ENCODE measurements at regions of chr2 and their contacts with region 1.

Region 1: DNA sequence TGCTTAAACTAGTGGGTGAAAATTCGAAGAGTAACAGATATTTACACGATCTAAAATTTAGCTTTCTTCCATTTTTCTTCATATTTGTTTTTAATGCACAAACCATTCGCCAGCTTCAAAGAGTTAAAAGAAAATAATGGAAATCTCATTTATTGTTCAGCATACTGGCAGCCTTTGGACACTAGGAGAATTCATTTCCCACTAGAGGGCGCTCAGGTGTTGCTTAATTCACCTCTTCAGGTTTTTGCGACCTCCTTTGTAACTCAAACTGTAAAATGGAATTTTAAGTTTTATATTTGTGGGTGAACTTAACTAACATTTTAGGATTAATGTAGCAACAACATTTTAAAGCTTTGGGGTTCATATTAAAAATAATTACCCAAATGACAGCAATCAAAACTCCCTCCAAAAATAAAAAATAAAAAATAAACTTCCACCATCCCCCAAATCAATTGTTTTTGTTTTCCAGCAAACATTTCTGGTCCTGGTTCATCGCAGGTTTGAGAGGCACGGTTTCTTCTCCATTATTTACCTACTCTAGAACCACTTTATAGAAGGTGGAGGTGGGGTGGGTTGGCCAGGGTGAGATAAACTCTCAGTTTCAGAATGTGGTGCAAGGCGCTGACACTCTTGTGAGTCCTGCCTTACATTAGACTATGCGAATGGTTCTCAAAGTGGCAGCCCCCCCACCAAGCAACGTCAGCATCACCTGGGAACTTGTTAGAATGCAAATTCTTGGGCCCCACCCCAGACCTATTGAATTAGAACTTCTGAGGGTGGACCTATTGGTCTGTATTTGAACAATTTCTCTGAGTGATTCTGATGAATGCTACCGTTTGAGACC is 24.7 kb upstream of the PNPT1 start:
- DNase-seq: peak; percentile 68
- H3K4me3 Mint-ChIP-seq: no peak overlapping the region
- H3K27ac Mint-ChIP-seq: no peak overlapping the region
- H3K4me1 Mint-ChIP-seq: no peaks in the 10 kb centered on the region
- H3K27me3 Mint-ChIP-seq: peaks cover 6% of the 10 kb centered on the region

Region 2: GRCh38 chr2:55961318-55961911 is 243.0 kb after region 1 on chr2:
- CTCF ChIA-PET with region 1: interaction called, 4 read pairs
- intact Hi-C with region 1: loop called (anchors 1 kb)
- DNase-seq: no peak
- H3K4me3 Mint-ChIP-seq: no peak overlapping the region
- H3K27ac Mint-ChIP-seq: no peak overlapping the region
- H3K4me1 Mint-ChIP-seq: no peaks in the 10 kb centered on the region
- H3K27me3 Mint-ChIP-seq: peaks cover 4% of the 10 kb centered on the region

Region 3: GRCh38 chr2:56009758-56010458 is 291.5 kb after region 1 on chr2:
- CTCF ChIA-PET with region 1: interaction called, 3 read pairs
- intact Hi-C with region 1: loop called (anchors 1 kb)
- DNase-seq: no peak
- H3K4me3 Mint-ChIP-seq: no peak overlapping the region
- H3K27ac Mint-ChIP-seq: no peak overlapping the region
- H3K4me1 Mint-ChIP-seq: no peaks in the 10 kb centered on the region
- H3K27me3 Mint-ChIP-seq: peaks cover 4% of the 10 kb centered on the region

Region 4: GRCh38 chr2:56132138-56132537 is 413.8 kb after region 1 on chr2:
- CTCF ChIA-PET with region 1: interaction called, 3 read pairs
- intact Hi-C with region 1: loop called (anchors 1 kb)
- DNase-seq: no peak
- H3K4me3 Mint-ChIP-seq: no peak overlapping the region
- H3K27ac Mint-ChIP-seq: no peak overlapping the region
- H3K4me1 Mint-ChIP-seq: no peaks in the 10 kb centered on the region
- H3K27me3 Mint-ChIP-seq: no peaks in the 10 kb centered on the region

Region 5: GRCh38 chr2:56183643-56184499 is 465.5 kb after region 1 on chr2 and contains the start of gene CCDC85A:
- CTCF ChIA-PET with region 1: no interaction called
- intact Hi-C with region 1: loop called (anchors 2 kb)
- DNase-seq: peak; percentile 76
- H3K4me3 Mint-ChIP-seq: peak within 1 kb of the TSS; percentile 38
- H3K27ac Mint-ChIP-seq: no peak within 1 kb of the TSS
- H3K4me1 Mint-ChIP-seq: peaks cover 3% of the 10 kb centered on the region
- H3K27me3 Mint-ChIP-seq: peaks cover 61% of the 10 kb centered on the region
- total RNA-seq, gene CCDC85A: not detected

Region 6: GRCh38 chr2:57516698-57517340 is 1798.4 kb after region 1 on chr2:
- CTCF ChIA-PET with region 1: interaction called, 3 read pairs
- intact Hi-C with region 1: loop called (anchors 2 kb)
- DNase-seq: no peak
- H3K4me3 Mint-ChIP-seq: no peak overlapping the region
- H3K27ac Mint-ChIP-seq: no peak overlapping the region
- H3K4me1 Mint-ChIP-seq: no peaks in the 10 kb centered on the region
- H3K27me3 Mint-ChIP-seq: no peaks in the 10 kb centered on the region

Measured in activated naive CD4-positive, alpha-beta T cell treated with anti-CD3 and anti-CD28 coated beads for 36 hours (primary cell).